ENCODE measurements at regions of chr10 and their contacts with region 1.

Region 1: GRCh38 chr10:89793649-89794254 is 92.4 kb downstream of the KIF20B start:
- DNase-seq: peak; percentile 73
- H3K4me3 ChIP-seq: no peak overlapping the region
- H3K27ac ChIP-seq: no peak overlapping the region
- H3K4me1 ChIP-seq: peaks cover 8% of the 10 kb centered on the region
- H3K27me3 ChIP-seq: peaks cover 0 to 2% of the 10 kb centered on the region in 2 experiments
- CTCF ChIP-seq: peak; percentile 63 to 66
- POLR2A ChIP-seq: no peak

Region 2: DNA sequence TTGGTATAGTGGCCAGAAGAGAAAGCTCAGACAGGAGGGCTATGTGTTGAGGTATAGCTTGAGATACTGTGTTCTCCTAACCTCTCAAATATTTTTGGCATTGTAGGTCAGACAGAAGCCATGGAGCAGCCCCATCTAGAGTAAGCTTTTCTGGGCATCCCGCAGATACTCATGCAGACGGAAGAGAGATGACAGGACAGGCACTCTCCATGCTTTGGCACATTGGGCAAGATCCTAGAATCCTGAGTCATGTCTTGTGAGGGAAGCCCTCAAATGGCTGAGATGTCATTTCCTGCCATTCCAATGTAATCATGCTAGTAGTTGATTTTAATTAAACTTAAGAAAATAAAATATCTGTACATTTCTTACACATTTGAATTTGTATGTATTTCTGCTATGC is 109.1 kb before region 1 on chr10:
- CTCF ChIA-PET with region 1: no interaction called
- POLR2A ChIA-PET with region 1: no interaction called
- dilution Hi-C with region 1: no loop called
- intact Hi-C with region 1: no loop called
- DNase-seq: no peak
- H3K4me3 ChIP-seq: no peak overlapping the region
- H3K27ac ChIP-seq: no peak overlapping the region
- H3K4me1 ChIP-seq: no peaks in the 10 kb centered on the region
- H3K27me3 ChIP-seq: no peaks in the 10 kb centered on the region
- CTCF ChIP-seq: no peak
- POLR2A ChIP-seq: no peak

Region 3: DNA sequence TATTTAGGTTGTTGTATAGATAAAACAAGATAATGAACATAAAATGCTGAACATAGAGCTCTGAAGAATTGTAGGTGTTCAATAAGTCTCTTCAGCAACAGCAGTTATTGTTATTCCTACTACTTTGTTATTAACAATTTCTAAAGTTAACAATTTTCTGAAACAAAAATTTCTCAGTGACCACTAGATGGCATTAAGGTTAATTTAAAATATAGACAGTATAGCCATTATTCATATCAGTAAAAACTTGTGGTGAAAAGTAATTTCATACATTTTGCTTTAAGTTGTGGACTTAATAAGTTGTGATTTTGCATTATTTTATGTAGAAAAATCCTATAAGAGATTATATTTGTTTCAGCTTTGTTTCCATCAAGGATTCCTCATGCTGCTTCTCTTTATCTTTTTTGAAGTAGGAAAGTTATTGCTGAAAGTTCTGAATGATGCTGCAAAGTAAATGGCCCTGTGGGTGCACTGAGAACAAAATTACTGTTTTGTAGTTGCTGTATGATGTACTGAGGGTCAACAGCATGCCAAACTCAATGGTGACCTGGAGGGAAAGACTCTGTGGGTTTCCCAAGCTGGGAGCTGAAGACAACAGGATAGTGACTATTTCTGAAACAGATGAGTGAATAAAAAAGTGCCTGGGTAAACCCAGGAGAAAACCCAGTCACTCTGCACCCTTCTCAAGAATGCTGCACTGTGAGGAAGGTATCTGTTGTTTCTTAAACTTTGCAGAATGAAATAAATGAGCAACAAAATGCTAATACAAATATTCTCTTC is 161.2 kb after region 1 on chr10:
- CTCF ChIA-PET with region 1: no interaction called
- POLR2A ChIA-PET with region 1: no interaction called
- dilution Hi-C with region 1: no loop called
- intact Hi-C with region 1: loop called (anchors 10 kb)
- DNase-seq: peak; percentile 4
- H3K4me3 ChIP-seq: no peak overlapping the region
- H3K27ac ChIP-seq: no peak overlapping the region
- H3K4me1 ChIP-seq: no peaks in the 10 kb centered on the region
- H3K27me3 ChIP-seq: peaks cover 0 to 12% of the 10 kb centered on the region in 2 experiments
- CTCF ChIP-seq: no peak
- POLR2A ChIP-seq: no peak

Region 4: GRCh38 chr10:90204956-90205314 is 411.2 kb after region 1 on chr10:
- CTCF ChIA-PET with region 1: no interaction called
- POLR2A ChIA-PET with region 1: no interaction called
- dilution Hi-C with region 1: no loop called
- intact Hi-C with region 1: loop called (anchors 10 kb)
- DNase-seq: no peak
- H3K4me3 ChIP-seq: no peak overlapping the region
- H3K27ac ChIP-seq: no peak overlapping the region
- H3K4me1 ChIP-seq: no peaks in the 10 kb centered on the region
- H3K27me3 ChIP-seq: no peaks in the 10 kb centered on the region
- CTCF ChIP-seq: no peak
- POLR2A ChIP-seq: no peak

Region 5: GRCh38 chr10:90592638-90593302 is 799.0 kb after region 1 on chr10:
- CTCF ChIA-PET with region 1: interaction called, 8 read pairs
- POLR2A ChIA-PET with region 1: no interaction called
- dilution Hi-C with region 1: no loop called
- intact Hi-C with region 1: loop called (anchors 1 kb)
- DNase-seq: peak; percentile 55
- H3K4me3 ChIP-seq: no peak overlapping the region
- H3K27ac ChIP-seq: no peak overlapping the region
- H3K4me1 ChIP-seq: no peaks in the 10 kb centered on the region
- H3K27me3 ChIP-seq: peaks cover 6 to 10% of the 10 kb centered on the region in 2 experiments
- CTCF ChIP-seq: peak; percentile 61 to 72
- POLR2A ChIP-seq: no peak

Region 6: GRCh38 chr10:90741926-90742565 is 948.3 kb after region 1 on chr10:
- CTCF ChIA-PET with region 1: no interaction called
- POLR2A ChIA-PET with region 1: no interaction called
- dilution Hi-C with region 1: no loop called
- intact Hi-C with region 1: loop called (anchors 10 kb)
- DNase-seq: peak; percentile 56
- H3K4me3 ChIP-seq: no peak overlapping the region
- H3K27ac ChIP-seq: no peak overlapping the region
- H3K4me1 ChIP-seq: peaks cover 6% of the 10 kb centered on the region
- H3K27me3 ChIP-seq: peaks cover 0 to 6% of the 10 kb centered on the region in 2 experiments
- CTCF ChIP-seq: no peak
- POLR2A ChIP-seq: no peak

Region 7: DNA sequence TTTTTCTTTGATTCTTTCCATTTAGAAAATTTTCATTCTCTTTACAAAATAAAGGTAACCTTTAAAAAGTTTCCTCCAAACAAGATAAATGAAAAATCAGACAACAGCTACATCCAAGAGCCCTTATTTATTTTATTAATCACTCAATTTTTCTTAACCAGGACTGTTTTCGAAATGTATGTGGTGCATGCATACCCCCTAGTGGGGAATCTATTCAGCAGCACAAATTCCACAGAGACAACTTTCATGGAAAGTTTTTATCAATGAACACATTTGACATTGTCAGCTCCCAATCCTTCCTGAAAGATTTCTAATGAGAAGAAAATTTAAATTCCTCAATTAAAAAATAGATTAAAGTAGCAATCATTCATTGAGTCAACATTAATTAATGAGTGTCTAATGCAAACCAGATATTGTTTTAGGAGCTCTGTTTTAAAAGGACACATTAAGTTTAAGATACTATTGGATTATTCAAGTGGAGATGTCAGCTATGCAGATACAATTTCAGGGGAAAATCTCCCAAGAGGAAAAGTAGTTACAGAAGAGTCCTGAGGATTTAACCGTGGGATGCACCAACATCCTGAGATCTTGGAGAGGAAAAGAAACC is 1069.3 kb after region 1 on chr10:
- CTCF ChIA-PET with region 1: interaction called, 12 read pairs
- POLR2A ChIA-PET with region 1: no interaction called
- dilution Hi-C with region 1: no loop called
- intact Hi-C with region 1: loop called (anchors 1 kb)
- DNase-seq: peak; percentile 49
- H3K4me3 ChIP-seq: no peak overlapping the region
- H3K27ac ChIP-seq: no peak overlapping the region
- H3K4me1 ChIP-seq: peaks cover 19% of the 10 kb centered on the region
- H3K27me3 ChIP-seq: peaks cover 24 to 43% of the 10 kb centered on the region in 2 experiments
- CTCF ChIP-seq: peak; percentile 57 to 62
- POLR2A ChIP-seq: no peak